ENCODE measurements at regions of chr19 and their contacts with region 1.

Region 1: DNA sequence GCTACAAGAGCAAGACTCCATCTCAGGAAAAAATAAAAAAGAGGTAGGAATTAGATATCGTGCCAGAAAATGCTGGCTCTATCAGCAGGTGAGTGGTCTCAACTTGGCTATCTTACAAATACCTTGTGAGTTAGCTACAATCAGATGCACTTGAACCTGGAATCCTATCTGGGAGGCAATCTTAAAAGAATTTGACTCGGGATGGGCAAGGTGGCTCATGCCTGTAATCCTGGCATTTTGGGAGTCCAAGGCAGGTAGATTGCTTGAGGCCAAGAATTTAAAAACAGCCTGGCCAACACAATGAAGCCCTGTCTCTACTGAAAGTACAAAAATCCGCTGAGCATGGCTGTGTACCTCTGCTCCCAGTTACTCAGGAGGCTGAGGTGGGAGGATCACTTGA is 29.4 kb downstream of the NLRP2 start:
- DNase-seq: no peak
- H3K4me3 Mint-ChIP-seq: no peak overlapping the region
- H3K27ac Mint-ChIP-seq: no peak overlapping the region
- H3K4me1 Mint-ChIP-seq: no peaks in the 10 kb centered on the region
- H3K27me3 Mint-ChIP-seq: peaks cover 2% of the 10 kb centered on the region

Region 2: GRCh38 chr19:55930996-55931515 is 935.5 kb after region 1 on chr19:
- CTCF ChIA-PET with region 1: no interaction called
- POLR2A ChIA-PET with region 1: no interaction called
- intact Hi-C with region 1: loop called (anchors 10 kb)
- DNase-seq: no peak
- H3K4me3 Mint-ChIP-seq: no peak overlapping the region
- H3K27ac Mint-ChIP-seq: no peak overlapping the region
- H3K4me1 Mint-ChIP-seq: no peaks in the 10 kb centered on the region
- H3K27me3 Mint-ChIP-seq: no peaks in the 10 kb centered on the region